Activated naive CD4-positive, alpha-beta T cell treated with anti-CD3 and anti-CD28 coated beads, Interleukin-2, amount 10 ng/mL, durations not matched to agents 7 days and 5 days (primary cell): ENCODE measurements at regions of chr5 and their contacts with region 1.

Region 1: DNA sequence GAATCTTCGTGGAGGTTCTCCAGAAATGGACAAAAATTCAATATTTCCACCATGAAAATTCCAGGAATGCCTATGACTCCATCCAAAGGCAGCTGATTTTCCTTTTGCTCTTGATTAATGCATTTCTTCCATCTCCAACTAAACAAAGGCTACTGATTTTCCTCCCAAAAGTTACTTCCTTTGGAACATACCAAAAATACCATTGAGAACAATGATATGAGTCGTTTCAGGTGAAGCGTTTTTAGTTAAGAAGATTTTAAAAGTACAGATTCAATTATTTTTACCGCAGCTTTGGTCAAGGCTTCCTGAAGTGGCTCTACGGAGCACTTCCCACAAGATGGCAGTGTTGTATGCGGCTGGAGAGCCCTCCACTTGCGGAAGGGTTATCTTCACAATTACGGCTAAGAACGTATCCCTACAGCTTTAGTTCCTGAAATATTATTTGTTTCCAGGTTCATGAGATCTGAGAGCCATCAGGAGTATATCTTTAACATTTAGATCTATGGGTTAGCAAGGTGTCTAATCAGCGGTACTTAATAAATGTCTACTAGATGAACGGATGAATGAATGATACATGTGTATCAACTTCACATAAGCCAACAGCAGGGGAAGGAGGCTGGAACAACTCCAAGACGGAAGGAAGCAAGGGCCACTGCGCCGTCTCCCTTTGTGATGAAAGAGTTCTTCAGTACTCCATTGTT is 35.9 kb upstream of the ARSB start:
- DNase-seq: peak; percentile 54
- H3K4me3 Mint-ChIP-seq: no peak overlapping the region
- H3K27ac Mint-ChIP-seq: no peak overlapping the region
- H3K4me1 Mint-ChIP-seq: peaks cover 4% of the 10 kb centered on the region
- H3K27me3 Mint-ChIP-seq: peaks cover 45% of the 10 kb centered on the region

Region 2: GRCh38 chr5:78899922-78900362 is 121.1 kb before region 1 on chr5:
- CTCF ChIA-PET with region 1: interaction called, 36 read pairs
- DNase-seq: peak; percentile 50
- H3K4me3 Mint-ChIP-seq: no peak overlapping the region
- H3K27ac Mint-ChIP-seq: no peak overlapping the region
- H3K4me1 Mint-ChIP-seq: no peaks in the 10 kb centered on the region
- H3K27me3 Mint-ChIP-seq: no peaks in the 10 kb centered on the region

Region 3: DNA sequence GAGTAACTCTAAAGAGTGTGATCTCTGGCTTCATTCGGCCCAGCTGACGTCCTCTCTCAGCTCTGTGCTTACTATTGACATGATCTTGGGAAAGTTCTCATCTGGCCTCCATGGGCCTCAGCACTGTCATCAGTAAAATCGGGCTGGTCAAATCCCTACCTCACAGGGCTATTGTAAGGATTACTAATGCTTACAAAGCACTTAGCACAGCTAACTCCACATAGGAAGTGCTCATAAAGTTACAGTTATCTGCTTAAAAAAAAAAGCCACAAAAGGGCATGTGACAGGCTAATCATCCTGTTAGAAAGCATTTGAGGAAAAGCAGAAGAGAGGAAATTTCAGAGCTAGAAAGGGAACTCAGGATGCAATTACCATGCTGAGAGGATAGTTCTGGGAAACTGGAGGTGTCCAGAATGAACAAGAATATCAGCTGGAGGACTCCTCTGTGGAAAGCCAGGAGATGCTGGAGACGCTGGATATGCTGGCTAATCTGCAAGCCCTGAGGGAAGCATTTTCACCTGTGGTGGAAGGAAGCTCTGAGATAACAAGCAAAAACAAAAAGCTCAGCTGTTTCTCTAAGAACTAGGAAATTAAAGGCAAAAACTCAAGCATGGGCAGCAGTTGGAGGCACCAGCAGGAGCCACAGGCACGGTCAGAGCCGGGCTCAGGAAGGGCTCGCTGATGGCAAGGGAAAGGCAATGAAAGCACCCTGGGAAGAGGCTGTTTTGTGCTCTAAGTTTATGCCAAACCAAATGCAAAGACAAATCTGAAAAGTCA is 86.2 kb after region 1 on chr5:
- CTCF ChIA-PET with region 1: interaction called, 22 read pairs
- DNase-seq: no peak
- H3K4me3 Mint-ChIP-seq: no peak overlapping the region
- H3K27ac Mint-ChIP-seq: no peak overlapping the region
- H3K4me1 Mint-ChIP-seq: no peaks in the 10 kb centered on the region
- H3K27me3 Mint-ChIP-seq: peaks cover 45% of the 10 kb centered on the region

Region 4: GRCh38 chr5:79464695-79465332 is 443.8 kb after region 1 on chr5:
- CTCF ChIA-PET with region 1: interaction called, 42 read pairs
- DNase-seq: no peak
- H3K4me3 Mint-ChIP-seq: no peak overlapping the region
- H3K27ac Mint-ChIP-seq: no peak overlapping the region
- H3K4me1 Mint-ChIP-seq: no peaks in the 10 kb centered on the region
- H3K27me3 Mint-ChIP-seq: peaks cover 9% of the 10 kb centered on the region